ENCODE measurements at regions of chr12 and their contacts with region 1.

Region 1: GRCh38 chr12:120265473-120266179 is at the start of gene PXN:
- DNase-seq: peak; percentile 70 to 96 (median 88)
- ATAC-seq: peak; percentile 88 to 95 (median 89)
- H3K4me3 ChIP-seq: peak within 1 kb of the TSS; percentile 85 to 94
- H3K4me3 Mint-ChIP-seq: peak within 1 kb of the TSS; percentile 90 to 97 (median 94)
- H3K27ac ChIP-seq: peak within 1 kb of the TSS; percentile 74
- H3K27ac Mint-ChIP-seq: peak within 1 kb of the TSS; percentile 88 to 93
- H3K4me1 ChIP-seq: peaks cover 30 to 48% of the 10 kb centered on the region in 2 experiments
- H3K4me1 Mint-ChIP-seq: peaks cover 41 to 47% (median 41%) of the 10 kb centered on the region in 3 donors
- H3K27me3 ChIP-seq: no peaks in the 10 kb centered on the region
- H3K27me3 Mint-ChIP-seq: no peaks in the 10 kb centered on the region
- total RNA-seq, gene PXN: 128 to 202 (median 137) TPM

Region 2: DNA sequence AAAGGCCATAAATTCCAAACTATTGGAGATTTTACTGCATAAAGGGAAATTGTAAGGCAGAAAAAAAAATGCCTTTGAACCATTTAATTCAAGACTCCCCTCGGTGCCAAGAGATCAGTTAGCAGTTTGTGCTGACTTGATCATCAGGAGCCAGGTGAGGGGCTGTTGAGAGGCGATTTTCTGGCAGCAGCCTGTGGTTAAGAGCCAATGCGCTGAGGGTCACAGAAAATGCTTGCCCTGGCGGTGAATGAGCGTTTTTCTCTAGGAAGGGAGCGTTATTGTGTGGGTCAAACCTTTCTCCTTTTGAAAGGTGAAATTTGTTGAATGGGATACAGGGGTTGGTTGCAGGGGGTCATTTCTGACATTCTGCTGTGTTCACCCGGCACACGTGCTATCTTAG is 1279.6 kb before region 1 on chr12:
- CTCF ChIA-PET with region 1: no interaction called
- POLR2A ChIA-PET with region 1: no interaction called
- DNase-seq: no peak
- ATAC-seq: no peak
- H3K4me3 ChIP-seq: no peak overlapping the region
- H3K4me3 Mint-ChIP-seq: no peak overlapping the region
- H3K27ac ChIP-seq: no peak overlapping the region
- H3K27ac Mint-ChIP-seq: no peak overlapping the region
- H3K4me1 ChIP-seq: no peaks in the 10 kb centered on the region
- H3K4me1 Mint-ChIP-seq: no peaks in the 10 kb centered on the region
- H3K27me3 ChIP-seq: peaks cover 9 to 17% of the 10 kb centered on the region in 2 experiments
- H3K27me3 Mint-ChIP-seq: peaks cover 28 to 29% of the 10 kb centered on the region in 2 donors

Region 3: GRCh38 chr12:120200364-120200800 is 65.2 kb before region 1 on chr12:
- CTCF ChIA-PET with region 1: interaction called in 1 of 2 experiments, 21 read pairs
- POLR2A ChIA-PET with region 1: interaction called, 6 to 22 read pairs
- DNase-seq: no peak
- ATAC-seq: no peak
- H3K4me3 ChIP-seq: peak overlapping the region; percentile 66 to 92
- H3K4me3 Mint-ChIP-seq: peak overlapping the region; percentile 94 to 97 (median 96)
- H3K27ac ChIP-seq: peak overlapping the region; percentile 59
- H3K27ac Mint-ChIP-seq: peak overlapping the region; percentile 99
- H3K4me1 ChIP-seq: peaks cover 11 to 37% of the 10 kb centered on the region in 2 experiments
- H3K4me1 Mint-ChIP-seq: peaks cover 36 to 46% (median 43%) of the 10 kb centered on the region in 3 donors
- H3K27me3 ChIP-seq: no peaks in the 10 kb centered on the region
- H3K27me3 Mint-ChIP-seq: no peaks in the 10 kb centered on the region

Region 4: GRCh38 chr12:120234643-120235368 is 30.8 kb before region 1 on chr12:
- CTCF ChIA-PET with region 1: interaction called, 8 to 43 read pairs
- POLR2A ChIA-PET with region 1: interaction called, 8 to 15 read pairs
- DNase-seq: peak in 1 of 35 experiments; percentile 27
- ATAC-seq: no peak
- H3K4me3 ChIP-seq: no peak overlapping the region
- H3K4me3 Mint-ChIP-seq: no peak overlapping the region
- H3K27ac ChIP-seq: peak overlapping the region; percentile 24
- H3K27ac Mint-ChIP-seq: peak overlapping the region; percentile 90 to 97
- H3K4me1 ChIP-seq: peaks cover 28 to 99% of the 10 kb centered on the region in 2 experiments
- H3K4me1 Mint-ChIP-seq: peaks cover 81 to 93% (median 90%) of the 10 kb centered on the region in 3 donors
- H3K27me3 ChIP-seq: no peaks in the 10 kb centered on the region
- H3K27me3 Mint-ChIP-seq: no peaks in the 10 kb centered on the region

Region 5: DNA sequence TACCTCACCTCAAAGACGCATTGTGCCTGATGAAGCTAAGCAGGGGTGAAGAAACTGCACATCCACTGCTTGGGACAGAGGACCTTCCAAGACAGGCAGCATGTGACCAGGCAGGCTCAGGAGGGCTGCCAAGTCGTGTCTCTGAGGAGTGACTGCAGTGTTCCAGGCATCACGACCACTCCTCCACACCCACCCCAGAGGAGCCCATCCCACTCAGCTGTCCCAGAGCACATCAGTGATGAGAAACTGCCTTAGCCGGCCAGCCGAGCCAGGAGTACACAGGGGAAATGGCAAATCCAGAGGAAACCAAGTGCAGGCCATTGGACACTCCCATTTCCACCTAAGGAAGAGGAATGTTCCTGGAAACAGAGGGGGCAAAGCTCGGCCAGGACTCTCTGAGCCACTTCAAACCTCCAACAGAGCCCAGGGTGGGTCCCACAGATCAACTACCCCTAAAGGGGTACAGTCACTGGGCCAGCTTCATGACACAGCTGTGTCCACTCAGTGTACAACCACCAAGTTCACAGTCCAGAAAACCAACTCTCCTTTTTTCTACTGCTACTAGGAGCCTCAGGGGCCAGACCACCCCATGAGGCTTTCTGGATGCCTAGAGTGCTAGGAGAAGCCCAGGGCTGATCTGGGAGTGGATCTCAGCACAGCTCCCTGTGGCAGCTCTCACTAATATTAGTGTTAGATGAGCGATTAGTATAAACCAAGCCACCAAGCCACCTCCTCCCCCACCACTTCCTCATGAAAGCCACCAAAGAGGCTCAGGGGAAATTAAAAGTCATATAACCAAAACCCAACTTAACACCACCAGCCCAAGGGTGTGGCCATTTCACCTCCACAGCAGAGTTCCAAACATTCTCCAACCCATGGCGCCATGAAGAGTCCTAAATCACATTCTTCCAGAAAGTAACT is 15.5 kb before region 1 on chr12:
- CTCF ChIA-PET with region 1: interaction called, 4 to 46 read pairs
- POLR2A ChIA-PET with region 1: interaction called, 9 to 12 read pairs
- DNase-seq: peak in 17 of 35 experiments; percentile 25 to 66 (median 40)
- ATAC-seq: peak in 1 of 4 experiments; percentile 13
- H3K4me3 ChIP-seq: peak overlapping the region; percentile 26 to 30
- H3K4me3 Mint-ChIP-seq: peak overlapping the region; percentile 62 to 64 (median 63)
- H3K27ac ChIP-seq: peak overlapping the region; percentile 75
- H3K27ac Mint-ChIP-seq: peak overlapping the region; percentile 88
- H3K4me1 ChIP-seq: peaks cover 53 to 85% of the 10 kb centered on the region in 2 experiments
- H3K4me1 Mint-ChIP-seq: peaks cover 83 to 86% (median 83%) of the 10 kb centered on the region in 3 donors
- H3K27me3 ChIP-seq: no peaks in the 10 kb centered on the region
- H3K27me3 Mint-ChIP-seq: no peaks in the 10 kb centered on the region

Measured in T-cell (primary cell).